Activated CD8-positive, alpha-beta T cell treated with anti-CD3 and anti-CD28 coated beads for 36 hours (primary cell): ENCODE measurements at regions of chr21 and their contacts with region 1.

Region 1: GRCh38 chr21:36854391-36854790 is 112.1 kb downstream of the HLCS start:
- DNase-seq: peak; percentile 57
- ATAC-seq: peak; percentile 70
- H3K4me3 Mint-ChIP-seq: no peak overlapping the region
- H3K27ac Mint-ChIP-seq: no peak overlapping the region
- H3K4me1 Mint-ChIP-seq: peaks cover 11% of the 10 kb centered on the region
- H3K27me3 Mint-ChIP-seq: no peaks in the 10 kb centered on the region
- CTCF ChIP-seq: peak; percentile 62

Region 2: GRCh38 chr21:36747815-36748383 is 106.5 kb before region 1 on chr21:
- CTCF ChIA-PET with region 1: interaction called, 15 read pairs
- POLR2A ChIA-PET with region 1: no interaction called
- intact Hi-C with region 1: no loop called
- DNase-seq: peak; percentile 63
- ATAC-seq: peak; percentile 91
- H3K4me3 Mint-ChIP-seq: peak overlapping the region; percentile 37
- H3K27ac Mint-ChIP-seq: no peak overlapping the region
- H3K4me1 Mint-ChIP-seq: peaks cover 11% of the 10 kb centered on the region
- H3K27me3 Mint-ChIP-seq: peaks cover 38% of the 10 kb centered on the region
- CTCF ChIP-seq: no peak

Region 3: DNA sequence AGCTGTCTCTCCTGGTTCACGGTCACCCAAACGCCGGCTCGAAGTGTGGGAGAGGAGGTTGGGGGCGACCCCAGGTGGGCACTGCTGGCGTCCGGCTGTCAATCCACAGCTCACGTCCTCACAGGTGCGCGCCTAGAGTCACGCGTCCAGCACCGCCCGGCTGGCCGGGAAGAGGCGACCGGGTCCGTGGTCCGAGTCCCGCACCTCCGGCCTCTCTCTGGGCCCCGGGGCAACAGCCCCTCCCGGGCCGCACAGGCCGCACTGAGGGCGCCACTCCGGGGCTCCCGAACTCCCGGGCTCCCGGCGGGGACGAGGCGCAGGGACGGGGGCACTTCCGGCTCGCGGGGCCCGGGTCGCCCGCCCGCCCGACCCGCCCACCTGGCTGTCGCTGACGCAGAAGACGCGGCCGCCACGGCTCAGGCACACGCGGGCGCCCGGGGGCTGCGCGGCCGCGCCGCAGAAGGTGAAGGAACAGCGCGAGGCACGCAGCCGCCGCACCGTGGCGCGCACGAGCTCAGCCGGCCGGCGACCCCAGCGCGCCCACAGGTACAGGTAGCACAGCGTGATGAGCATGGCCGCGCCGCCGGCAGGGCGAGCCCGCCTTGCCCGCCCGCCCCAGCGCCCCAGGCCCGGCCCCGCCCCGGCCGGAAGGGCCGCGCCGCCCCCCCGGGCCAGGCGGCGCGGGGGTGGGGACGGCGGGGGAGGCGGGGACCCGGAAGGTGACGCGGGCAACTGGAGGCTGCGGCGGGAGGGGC is 111.9 kb after region 1 on chr21 and contains the start of gene HLCS:
- CTCF ChIA-PET with region 1: no interaction called
- POLR2A ChIA-PET with region 1: no interaction called
- intact Hi-C with region 1: no loop called
- DNase-seq: peak; percentile 78
- ATAC-seq: peak; percentile 89
- H3K4me3 Mint-ChIP-seq: peak within 1 kb of the TSS; percentile 88
- H3K27ac Mint-ChIP-seq: peak within 1 kb of the TSS; percentile 93
- H3K4me1 Mint-ChIP-seq: peaks cover 22% of the 10 kb centered on the region
- H3K27me3 Mint-ChIP-seq: no peaks in the 10 kb centered on the region
- CTCF ChIP-seq: no peak
- total RNA-seq, gene HLCS: 12.5 to 15.5 TPM